A549 (cell line): ENCODE measurements at regions of chr10 and their contacts with region 1.

Region 1: GRCh38 chr10:5629303-5630111 is 36.9 kb downstream of the ASB13 start:
- DNase-seq: peak; percentile 67 to 74
- ATAC-seq: peak; percentile 55 to 90; a peak in 3 of 6 replicates
- H3K4me3 ChIP-seq: no peak overlapping the region
- H3K27ac ChIP-seq: no peak overlapping the region; a peak in 1 of 6 replicates
- H3K4me1 ChIP-seq: peaks cover 27% of the 10 kb centered on the region
- CTCF ChIP-seq: peak; percentile 86
- EP300 ChIP-seq: no peak
- POLR2A ChIP-seq: no peak
- RAD21 ChIP-seq: peak; percentile 46 to 66; a peak in 4 of 5 replicates

Region 2: GRCh38 chr10:5043716-5044115 is 585.8 kb before region 1 on chr10:
- CTCF ChIA-PET with region 1: no interaction called
- POLR2A ChIA-PET with region 1: no interaction called
- DNase-seq: no peak
- ATAC-seq: no peak
- H3K4me3 ChIP-seq: no peak overlapping the region
- H3K27ac ChIP-seq: peak overlapping the region; percentile 27 to 52; a peak in 4 of 6 replicates
- H3K4me1 ChIP-seq: peaks cover 19% of the 10 kb centered on the region
- CTCF ChIP-seq: no peak
- EP300 ChIP-seq: no peak
- POLR2A ChIP-seq: no peak
- RAD21 ChIP-seq: no peak

Region 3: GRCh38 chr10:5297466-5297865 is 332.0 kb before region 1 on chr10:
- CTCF ChIA-PET with region 1: no interaction called
- POLR2A ChIA-PET with region 1: no interaction called
- DNase-seq: no peak
- ATAC-seq: no peak
- H3K4me3 ChIP-seq: no peak overlapping the region
- H3K27ac ChIP-seq: peak overlapping the region in 1 of 2 experiments; percentile 61; a peak in 4 of 6 replicates
- H3K4me1 ChIP-seq: peaks cover 21% of the 10 kb centered on the region
- CTCF ChIP-seq: no peak
- EP300 ChIP-seq: no peak
- POLR2A ChIP-seq: no peak
- RAD21 ChIP-seq: no peak

Region 4: GRCh38 chr10:5412277-5412941 is 217.1 kb before region 1 on chr10 and contains the start of gene NET1:
- CTCF ChIA-PET with region 1: no interaction called
- POLR2A ChIA-PET with region 1: no interaction called
- DNase-seq: peak; percentile 95 to 97
- ATAC-seq: peak; percentile 98 to 99
- H3K4me3 ChIP-seq: peak within 1 kb of the TSS; percentile 69
- H3K27ac ChIP-seq: peak within 1 kb of the TSS; percentile 84 to 87
- H3K4me1 ChIP-seq: peaks cover 13% of the 10 kb centered on the region
- CTCF ChIP-seq: no peak
- EP300 ChIP-seq: no peak
- POLR2A ChIP-seq: peak; percentile 22; the same call in 1 of the 2 replicates
- RAD21 ChIP-seq: no peak
- polyA plus RNA-seq, gene NET1: 132 and 144 TPM in 2 replicates

Region 5: DNA sequence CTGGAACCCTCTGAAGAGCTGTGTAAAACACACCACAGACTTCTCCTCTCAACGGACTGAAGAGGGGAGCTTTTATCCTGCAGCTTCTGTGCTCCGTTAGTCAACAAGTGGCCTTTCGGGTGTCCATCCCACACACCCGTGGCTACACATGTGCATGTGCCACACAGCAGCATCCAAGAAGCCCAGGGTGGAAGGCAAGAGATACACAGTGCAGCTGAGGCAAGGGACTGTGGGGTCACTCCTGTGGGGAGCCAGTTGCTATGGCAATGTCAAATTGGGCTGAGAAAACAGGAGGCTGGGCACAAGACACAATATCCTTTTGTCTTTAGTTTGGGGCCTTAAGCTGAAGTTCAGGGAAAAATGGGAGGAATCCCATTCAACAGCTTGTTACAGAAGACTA is 188.4 kb before region 1 on chr10:
- CTCF ChIA-PET with region 1: interaction called, 432 read pairs
- POLR2A ChIA-PET with region 1: interaction called, 3 read pairs
- DNase-seq: no peak
- ATAC-seq: peak in 1 of 2 experiments; percentile 43; a peak in 2 of 6 replicates
- H3K4me3 ChIP-seq: no peak overlapping the region
- H3K27ac ChIP-seq: no peak overlapping the region
- H3K4me1 ChIP-seq: peaks cover 6% of the 10 kb centered on the region
- CTCF ChIP-seq: no peak
- EP300 ChIP-seq: no peak
- POLR2A ChIP-seq: no peak
- RAD21 ChIP-seq: no peak

Region 6: DNA sequence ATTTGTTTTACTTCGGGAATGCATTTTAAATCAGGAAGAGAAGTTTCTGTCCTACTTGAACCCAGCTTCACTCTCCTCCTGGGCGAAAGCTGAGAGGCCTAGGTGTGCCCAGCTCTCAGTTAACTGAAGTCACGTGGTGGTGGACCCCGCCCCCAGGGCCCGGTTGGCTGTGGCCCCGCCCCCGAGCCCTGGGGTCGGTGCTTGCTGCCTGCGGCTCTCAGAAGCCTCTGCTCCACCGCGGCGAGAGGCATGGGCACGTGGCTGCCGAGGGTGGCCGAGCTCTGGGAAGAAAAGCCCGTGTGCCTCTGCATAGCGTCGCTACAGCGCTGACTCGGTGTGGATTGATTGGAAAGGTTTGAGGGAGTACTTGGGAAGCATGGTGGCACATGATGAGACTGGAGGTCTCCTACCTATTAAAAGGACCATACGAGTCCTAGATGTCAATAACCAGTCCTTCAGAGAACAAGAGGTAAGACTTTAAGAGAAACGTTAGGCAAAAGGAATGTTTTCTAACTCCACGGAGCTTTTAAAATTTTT is 183.0 kb before region 1 on chr10:
- CTCF ChIA-PET with region 1: interaction called, 432 read pairs
- POLR2A ChIA-PET with region 1: interaction called, 3 read pairs
- DNase-seq: peak; percentile 76 to 89
- ATAC-seq: peak; percentile 95 to 96
- H3K4me3 ChIP-seq: peak overlapping the region; percentile 61
- H3K27ac ChIP-seq: peak overlapping the region; percentile 73 to 84
- H3K4me1 ChIP-seq: peaks cover 35% of the 10 kb centered on the region
- CTCF ChIP-seq: no peak
- EP300 ChIP-seq: no peak
- POLR2A ChIP-seq: peak; percentile 99
- RAD21 ChIP-seq: peak; percentile 31 to 40; a peak in 2 of 5 replicates

Region 7: GRCh38 chr10:5488309-5489167 is 141.0 kb before region 1 on chr10:
- CTCF ChIA-PET with region 1: no interaction called
- POLR2A ChIA-PET with region 1: no interaction called
- DNase-seq: no peak
- ATAC-seq: no peak
- H3K4me3 ChIP-seq: no peak overlapping the region
- H3K27ac ChIP-seq: peak overlapping the region in 1 of 2 experiments; percentile 9; a peak in 1 of 6 replicates
- H3K4me1 ChIP-seq: peaks cover 4% of the 10 kb centered on the region
- CTCF ChIP-seq: no peak
- EP300 ChIP-seq: no peak
- POLR2A ChIP-seq: no peak
- RAD21 ChIP-seq: no peak

Region 8: GRCh38 chr10:5525561-5526341 is 103.8 kb before region 1 on chr10:
- CTCF ChIA-PET with region 1: interaction called, 28 read pairs
- POLR2A ChIA-PET with region 1: no interaction called
- DNase-seq: no peak
- ATAC-seq: no peak
- H3K4me3 ChIP-seq: no peak overlapping the region
- H3K27ac ChIP-seq: no peak overlapping the region
- H3K4me1 ChIP-seq: no peaks in the 10 kb centered on the region
- CTCF ChIP-seq: no peak
- EP300 ChIP-seq: no peak
- POLR2A ChIP-seq: no peak
- RAD21 ChIP-seq: no peak